HepG2 (cell line): ENCODE measurements at regions of chrX and their contacts with region 1.

Region 1: DNA sequence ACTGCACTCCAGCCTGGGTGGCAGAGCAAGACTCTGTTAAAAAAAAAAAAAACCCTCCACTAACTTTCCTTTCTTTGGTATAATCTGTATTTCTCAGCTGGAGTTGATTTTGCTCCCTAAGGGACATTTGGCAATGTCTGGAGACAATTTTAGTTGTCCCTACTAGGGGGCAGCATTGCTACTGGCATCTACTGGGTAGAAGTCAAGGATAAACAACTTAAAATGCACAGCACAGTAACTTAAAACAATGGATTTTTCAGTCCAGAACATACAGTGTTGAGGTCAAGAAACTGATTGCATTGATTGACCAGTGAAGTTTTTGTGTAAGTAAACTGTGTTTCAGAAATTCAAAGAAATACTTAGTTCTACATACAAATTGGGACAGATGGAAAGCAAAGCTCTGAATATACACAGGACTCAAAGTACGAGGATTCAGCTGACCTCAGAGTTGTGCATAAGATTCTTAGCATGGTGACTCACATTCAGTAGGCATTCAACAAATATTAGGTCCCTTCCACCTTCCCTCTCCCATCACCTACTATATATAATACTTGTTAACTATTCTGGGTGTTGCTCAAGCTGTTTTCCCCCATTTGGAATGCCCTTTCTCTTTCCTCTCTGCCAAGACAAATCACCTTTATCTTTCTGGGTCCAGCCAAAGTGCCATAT is 8.8 kb downstream of the DDX53 start:
- DNase-seq: peak; percentile 1
- ATAC-seq: no peak
- H3K4me3 ChIP-seq: no peak overlapping the region
- H3K27ac ChIP-seq: no peak overlapping the region
- H3K4me1 ChIP-seq: no peaks in the 10 kb centered on the region
- H3K27me3 ChIP-seq: no peaks in the 10 kb centered on the region
- CTCF ChIP-seq: peak; percentile 11; the same call in 1 of the 2 replicates
- EP300 ChIP-seq: no peak
- POLR2A ChIP-seq: no peak
- RAD21 ChIP-seq: no peak

Region 2: DNA sequence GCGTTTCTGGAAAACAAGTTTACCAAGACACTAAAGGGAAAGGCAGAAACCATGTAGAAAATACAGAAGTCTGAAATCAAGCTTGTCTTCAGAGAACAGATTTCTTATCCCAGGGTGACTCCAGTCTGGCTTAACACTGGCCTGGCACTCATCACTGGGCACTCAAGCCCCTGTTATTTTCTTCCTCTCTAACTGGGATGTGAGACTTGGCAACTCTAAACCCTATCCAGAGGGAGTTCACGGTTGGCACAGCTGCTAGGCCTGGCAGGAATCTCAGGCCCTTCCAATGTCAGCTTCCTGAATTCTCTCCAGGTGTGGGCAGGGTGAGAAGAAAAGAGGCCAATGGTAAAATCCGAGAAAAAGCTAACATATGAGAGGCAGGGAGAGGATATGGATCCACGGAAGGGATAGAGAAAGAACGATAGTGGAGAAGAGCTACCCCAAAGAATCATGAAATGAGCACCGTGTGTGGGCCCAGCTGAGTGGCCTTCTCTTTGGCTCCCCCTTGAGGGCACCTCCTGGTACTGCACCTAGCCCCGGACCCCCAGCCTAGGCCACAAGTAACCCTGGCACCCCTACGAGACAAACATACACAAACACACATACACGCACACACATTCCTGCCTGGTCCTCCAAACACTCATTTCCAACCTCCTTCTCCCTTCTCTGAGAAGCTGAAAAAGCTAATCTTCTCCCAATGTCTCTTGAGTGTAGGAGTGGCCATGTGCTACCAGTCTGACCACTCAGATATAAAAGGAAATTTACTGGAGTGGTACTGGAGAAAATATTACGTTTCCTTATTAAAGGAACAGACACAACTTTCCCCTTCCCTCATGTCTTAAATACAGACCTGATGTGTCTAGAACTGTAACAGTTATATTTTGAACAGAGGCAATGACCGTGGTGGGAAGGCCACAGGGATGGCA is 309.5 kb after region 1 on chrX:
- CTCF ChIA-PET with region 1: no interaction called
- POLR2A ChIA-PET with region 1: no interaction called
- in situ Hi-C with region 1: no loop called
- intact Hi-C with region 1: loop called (anchors 10 kb)
- DNase-seq: no peak
- ATAC-seq: peak; percentile 82
- H3K4me3 ChIP-seq: no peak overlapping the region
- H3K27ac ChIP-seq: no peak overlapping the region
- H3K4me1 ChIP-seq: no peaks in the 10 kb centered on the region
- H3K27me3 ChIP-seq: no peaks in the 10 kb centered on the region
- CTCF ChIP-seq: peak; percentile 62
- EP300 ChIP-seq: no peak
- POLR2A ChIP-seq: no peak
- RAD21 ChIP-seq: no peak

Region 3: DNA sequence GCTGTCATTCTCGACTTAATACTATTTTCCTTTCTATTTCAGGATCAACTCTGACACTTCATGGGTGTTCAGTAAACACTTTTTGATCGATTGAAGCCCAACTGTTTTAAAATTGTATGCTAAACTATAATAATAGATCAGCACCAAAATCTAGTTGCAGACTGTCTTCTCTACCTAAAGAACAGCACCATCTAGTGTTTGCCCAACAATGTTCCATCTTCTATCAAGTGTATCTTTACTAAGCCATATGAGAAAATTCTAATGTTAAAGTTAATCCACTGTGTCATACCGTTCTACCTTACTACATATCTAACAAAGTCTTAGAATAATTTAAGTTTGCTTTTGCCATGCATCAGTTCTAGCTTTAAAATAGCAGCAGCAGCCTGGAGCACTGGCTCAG is 545.7 kb after region 1 on chrX:
- CTCF ChIA-PET with region 1: interaction called, 7 read pairs
- POLR2A ChIA-PET with region 1: no interaction called
- in situ Hi-C with region 1: no loop called
- intact Hi-C with region 1: loop called (anchors 2 kb)
- DNase-seq: peak; percentile 6
- ATAC-seq: 0 out of 3 replicates have a peak, but pooled peaks have one; percentile 30
- H3K4me3 ChIP-seq: no peak overlapping the region
- H3K27ac ChIP-seq: no peak overlapping the region
- H3K4me1 ChIP-seq: no peaks in the 10 kb centered on the region
- H3K27me3 ChIP-seq: no peaks in the 10 kb centered on the region
- CTCF ChIP-seq: peak; percentile 59
- EP300 ChIP-seq: no peak
- POLR2A ChIP-seq: no peak
- RAD21 ChIP-seq: no peak